Sciatic nerve (tissue), 2 donors: ENCODE measurements at regions of chr6 and their contacts with region 1.

Region 1: GRCh38 chr6:116279260-116280063 is at the start of gene TSPYL1:
- DNase-seq: peak; percentile 98
- ATAC-seq: peak; percentile 99
- total RNA-seq, gene TSPYL1: 71.8 TPM

Region 2: DNA sequence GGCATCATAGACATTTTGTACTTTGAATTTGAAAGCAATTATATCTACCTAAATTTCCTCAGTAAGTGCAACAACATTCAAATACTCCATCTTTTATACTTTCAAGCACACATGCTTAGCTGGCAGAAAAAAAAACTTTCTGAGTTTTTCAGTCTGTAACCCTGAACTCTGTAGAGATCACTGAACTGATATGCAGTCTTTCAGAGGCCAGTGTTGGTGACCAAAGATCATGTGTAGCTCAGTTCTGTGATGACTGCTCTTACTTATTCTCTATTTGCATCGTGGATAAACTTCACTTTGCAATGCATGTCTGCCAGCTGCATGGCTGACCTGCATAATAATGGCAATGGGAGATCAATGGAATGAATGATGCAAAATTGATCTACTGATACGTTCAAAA is 650.0 kb before region 1 on chr6:
- intact Hi-C with region 1: no loop called
- DNase-seq: no peak
- ATAC-seq: no peak

Region 3: GRCh38 chr6:116335612-116336215 is 56.3 kb after region 1 on chr6:
- intact Hi-C with region 1: no loop called
- DNase-seq: no peak
- ATAC-seq: no peak

Region 4: DNA sequence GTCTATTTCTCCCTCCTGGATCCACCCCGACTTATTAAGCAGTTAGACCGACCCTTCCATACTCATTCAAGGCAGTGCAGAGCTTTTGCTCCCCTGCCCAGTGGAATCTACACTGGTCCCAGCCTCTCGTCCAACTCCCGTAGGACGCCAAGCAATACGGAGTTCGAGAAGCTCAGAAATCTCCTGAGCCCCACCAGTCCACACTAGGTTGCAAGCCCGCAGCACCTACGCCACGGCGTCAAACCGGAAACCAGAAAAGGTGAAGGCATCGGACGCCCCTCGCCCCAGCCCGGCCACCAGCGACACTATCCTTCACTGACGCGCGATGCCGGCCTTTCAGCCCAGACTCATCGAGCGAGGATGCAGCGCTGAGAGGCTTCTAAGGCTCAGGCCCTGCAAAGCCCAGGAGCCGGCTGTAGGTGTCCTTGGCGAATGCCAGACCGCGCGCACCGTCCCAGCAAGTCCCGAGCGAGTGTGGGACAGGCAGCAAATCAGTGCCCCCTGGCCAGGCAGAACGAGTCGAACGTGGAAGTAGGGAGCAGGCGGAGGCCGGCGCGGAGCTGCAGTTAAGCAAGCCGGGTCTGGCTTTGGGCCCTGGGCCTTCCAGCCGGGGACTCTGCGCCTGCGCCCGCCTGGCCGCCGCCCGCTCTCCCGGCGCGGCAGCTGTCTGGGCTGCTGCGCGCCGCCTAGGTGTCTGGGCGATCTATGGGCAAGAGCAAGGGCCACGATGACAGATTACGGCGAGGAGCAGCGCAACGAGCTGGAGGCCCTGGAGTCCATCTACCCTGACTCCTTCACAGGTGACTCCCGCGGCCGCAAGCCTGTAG is 291.6 kb after region 1 on chr6 and contains the start of gene RWDD1:
- intact Hi-C with region 1: loop called (anchors 5 kb)
- DNase-seq: peak; percentile 98
- ATAC-seq: peak; percentile 99
- total RNA-seq, gene RWDD1: 39.6 TPM